SK-N-SH (cell line): ENCODE measurements at regions of chr3 and their contacts with region 1.

Region 1: GRCh38 chr3:149581681-149582370 is 76.0 kb downstream of the WWTR1 start:
- DNase-seq: no peak
- H3K4me3 ChIP-seq: 0 out of 4 replicates have a peak overlapping the region, but pooled peaks of 1 of the 2 experiments have one; percentile 25
- H3K27ac ChIP-seq: peak overlapping the region; percentile 68 to 100; a peak in 3 of 4 replicates
- H3K4me1 ChIP-seq: peaks cover 3 to 78% of the 10 kb centered on the region in 2 experiments; a peak in 3 of 4 replicates
- H3K27me3 ChIP-seq: no peaks in the 10 kb centered on the region
- CTCF ChIP-seq: no peak
- EP300 ChIP-seq: peak in 1 of 2 experiments; percentile 38; a peak in 1 of 4 replicates
- RAD21 ChIP-seq: no peak

Region 2: DNA sequence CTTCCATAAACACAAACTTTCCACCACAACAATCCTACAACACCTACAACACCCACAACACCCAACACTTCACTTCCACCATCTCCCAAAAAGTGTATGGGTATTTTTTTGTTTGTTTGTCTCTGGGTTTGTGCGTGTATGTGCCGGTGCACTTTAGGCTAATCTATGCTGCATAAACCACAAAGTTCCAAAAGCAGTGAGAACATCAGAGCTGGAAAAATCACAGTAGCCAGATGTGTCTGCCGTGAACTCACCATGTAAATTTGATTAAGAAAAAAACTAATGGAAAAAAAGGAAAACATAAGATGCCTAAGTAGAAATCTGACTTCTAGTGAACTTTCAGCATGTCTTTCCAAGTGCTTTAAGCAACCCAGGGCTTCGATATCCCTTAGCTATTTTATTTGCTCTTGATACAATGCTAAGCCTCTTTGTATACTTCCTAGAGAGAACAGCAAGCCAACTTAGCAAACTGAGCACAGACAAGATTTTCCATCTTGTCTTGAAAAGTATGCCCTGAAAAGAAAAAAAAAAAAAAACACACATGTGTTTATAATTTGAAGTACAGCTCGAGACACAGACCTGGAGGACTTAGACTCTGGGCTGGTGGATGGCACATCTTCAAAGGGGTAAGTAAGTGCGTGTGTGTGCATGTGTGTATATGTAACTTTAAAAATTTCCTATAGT is 15.4 kb before region 1 on chr3:
- CTCF ChIA-PET with region 1: interaction called, 26 read pairs
- POLR2A ChIA-PET with region 1: no interaction called
- DNase-seq: no peak
- H3K4me3 ChIP-seq: no peak overlapping the region
- H3K27ac ChIP-seq: peak overlapping the region; percentile 48; a peak in 3 of 4 replicates
- H3K4me1 ChIP-seq: peaks cover 0 to 21% of the 10 kb centered on the region in 2 experiments
- H3K27me3 ChIP-seq: no peaks in the 10 kb centered on the region
- CTCF ChIP-seq: no peak
- EP300 ChIP-seq: no peak
- RAD21 ChIP-seq: no peak

Region 3: DNA sequence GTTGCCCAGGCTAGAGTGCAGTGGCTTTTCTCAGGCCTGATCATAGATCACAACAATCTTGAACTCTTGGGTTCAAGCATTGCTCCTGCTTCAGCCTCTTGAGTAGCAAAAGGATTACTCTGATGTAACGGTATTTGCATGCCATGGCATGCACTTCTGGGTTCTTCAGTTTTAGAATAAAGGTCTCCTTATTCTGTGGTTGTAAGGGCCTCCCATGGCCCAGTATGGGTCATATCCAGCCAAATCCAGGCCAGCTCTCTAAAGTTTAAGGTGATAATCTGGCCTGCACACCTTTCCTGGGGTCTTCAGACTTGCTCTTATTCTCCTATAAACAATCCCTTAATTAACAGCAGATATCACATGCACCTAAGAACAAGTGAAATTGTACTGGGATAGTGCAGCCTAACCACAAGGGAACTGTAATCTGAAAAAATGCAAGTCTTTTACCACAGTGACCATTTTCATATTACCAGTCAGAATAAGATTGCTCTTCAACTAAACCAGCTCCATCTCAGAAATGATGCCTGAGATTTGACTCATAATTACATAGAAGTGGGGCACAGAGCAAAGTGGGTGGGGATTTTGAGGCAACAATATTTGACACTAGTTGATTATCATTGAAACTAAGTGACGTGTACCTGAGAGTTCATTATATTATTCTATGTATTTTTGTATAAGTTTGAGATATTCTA is 145.0 kb after region 1 on chr3:
- CTCF ChIA-PET with region 1: no interaction called
- POLR2A ChIA-PET with region 1: no interaction called
- DNase-seq: no peak
- H3K4me3 ChIP-seq: no peak overlapping the region
- H3K27ac ChIP-seq: no peak overlapping the region
- H3K4me1 ChIP-seq: no peaks in the 10 kb centered on the region
- H3K27me3 ChIP-seq: no peaks in the 10 kb centered on the region
- CTCF ChIP-seq: no peak
- EP300 ChIP-seq: no peak
- RAD21 ChIP-seq: no peak